Activated CD8-positive, alpha-beta T cell treated with anti-CD3 and anti-CD28 coated beads for 36 hours (primary cell): ENCODE measurements at regions of chr5 and their contacts with region 1.

Region 1: GRCh38 chr5:135565725-135566421 is 12.9 kb downstream of the CXCL14 start:
- DNase-seq: peak; percentile 83
- ATAC-seq: peak; percentile 77
- H3K4me3 Mint-ChIP-seq: no peak overlapping the region
- H3K27ac Mint-ChIP-seq: no peak overlapping the region
- H3K4me1 Mint-ChIP-seq: no peaks in the 10 kb centered on the region
- H3K27me3 Mint-ChIP-seq: no peaks in the 10 kb centered on the region
- CTCF ChIP-seq: peak; percentile 74

Region 2: DNA sequence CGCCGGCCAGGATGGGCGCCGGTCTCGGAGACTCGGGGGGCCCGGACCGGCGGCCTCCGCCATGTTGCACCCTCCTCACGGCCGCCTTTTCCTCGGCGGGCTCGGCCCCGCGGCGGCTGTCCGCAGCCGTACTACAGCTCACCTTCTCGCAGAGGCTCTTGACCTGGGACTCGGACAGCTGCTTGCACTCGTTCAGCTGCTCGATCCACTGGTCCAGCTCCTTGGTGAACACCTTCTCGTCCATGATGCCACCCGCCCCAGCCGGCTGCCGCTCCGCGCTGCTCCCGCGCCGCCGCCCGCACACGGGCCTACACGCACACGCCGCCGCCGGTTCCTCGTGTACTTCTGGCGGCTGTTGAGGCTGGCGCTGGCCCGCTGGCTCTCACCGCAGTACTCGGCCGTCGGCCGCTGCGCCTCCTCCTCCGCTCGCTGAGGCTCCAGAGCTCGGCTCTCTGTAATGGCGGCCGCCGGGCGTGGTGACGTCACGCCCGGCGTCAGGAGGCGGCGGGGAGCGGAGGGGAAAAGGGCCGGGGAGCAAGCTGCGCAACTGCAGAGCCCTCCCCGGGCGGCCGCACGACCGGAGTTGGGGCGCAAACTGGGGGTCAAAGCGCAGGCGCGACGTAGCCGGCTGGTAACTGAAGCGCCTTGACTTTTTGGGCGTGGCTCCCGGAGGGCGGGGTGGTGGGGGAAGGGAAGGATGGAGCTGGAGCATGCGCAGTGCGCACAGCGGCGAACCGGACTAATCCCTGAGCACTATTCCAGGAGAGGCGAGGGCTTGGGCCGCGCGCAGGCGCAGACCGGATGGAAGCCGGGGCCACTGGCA is 1340.0 kb before region 1 on chr5 and contains the start of gene PPP2CA:
- CTCF ChIA-PET with region 1: no interaction called
- POLR2A ChIA-PET with region 1: no interaction called
- intact Hi-C with region 1: no loop called
- DNase-seq: peak; percentile 98
- ATAC-seq: peak; percentile 90
- H3K4me3 Mint-ChIP-seq: peak within 1 kb of the TSS; percentile 98
- H3K27ac Mint-ChIP-seq: peak within 1 kb of the TSS; percentile 99
- H3K4me1 Mint-ChIP-seq: peaks cover 34% of the 10 kb centered on the region
- H3K27me3 Mint-ChIP-seq: no peaks in the 10 kb centered on the region
- CTCF ChIP-seq: no peak
- total RNA-seq, gene PPP2CA: 147 to 153 TPM

Region 3: DNA sequence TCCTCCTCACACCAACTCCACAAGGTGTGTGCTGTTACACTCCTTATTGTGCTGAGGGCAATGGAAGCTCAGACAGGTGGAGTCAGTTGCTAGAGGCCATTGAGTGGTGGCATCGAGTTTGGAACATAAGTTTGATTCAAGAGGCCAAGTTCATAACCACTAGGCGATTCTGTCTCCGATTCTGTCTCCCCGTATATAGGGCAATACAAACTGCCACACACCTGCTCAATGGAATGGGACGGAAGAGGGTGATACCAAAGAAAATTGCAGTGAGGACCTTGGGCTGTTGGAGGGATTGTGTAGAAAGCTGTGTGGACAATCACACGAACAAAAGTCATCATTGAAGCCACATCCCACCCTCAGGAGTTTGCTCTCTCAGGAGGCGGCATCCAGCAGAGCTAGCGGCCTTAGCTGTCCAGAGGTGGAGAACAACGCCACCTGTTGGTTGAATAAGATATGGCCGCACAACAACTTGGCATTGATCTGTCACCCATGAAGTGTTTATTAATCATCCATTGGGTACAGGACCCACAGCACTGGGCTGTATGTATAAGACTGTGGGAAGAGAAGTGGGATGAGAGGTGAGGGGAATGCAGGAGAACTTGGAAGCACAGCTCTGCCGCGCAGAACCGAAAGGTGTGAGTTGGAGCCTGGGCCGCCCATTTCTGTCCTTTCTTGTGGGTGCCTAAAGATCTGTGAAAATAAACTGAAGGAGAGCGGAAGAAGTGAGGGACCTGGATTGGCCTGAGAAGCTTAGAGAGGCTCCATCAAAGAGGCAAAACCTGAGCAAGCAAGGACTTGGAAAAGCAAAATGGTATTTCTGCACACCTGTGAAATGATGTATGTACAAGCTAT is 14.1 kb before region 1 on chr5:
- CTCF ChIA-PET with region 1: interaction called, 173 read pairs
- POLR2A ChIA-PET with region 1: no interaction called
- intact Hi-C with region 1: no loop called
- DNase-seq: peak; percentile 81
- ATAC-seq: peak; percentile 91
- H3K4me3 Mint-ChIP-seq: no peak overlapping the region
- H3K27ac Mint-ChIP-seq: no peak overlapping the region
- H3K4me1 Mint-ChIP-seq: no peaks in the 10 kb centered on the region
- H3K27me3 Mint-ChIP-seq: peaks cover 40% of the 10 kb centered on the region
- CTCF ChIP-seq: peak; percentile 79

Region 4: GRCh38 chr5:135578685-135579341 is 12.9 kb after region 1 on chr5 and contains the start of gene CXCL14:
- CTCF ChIA-PET with region 1: interaction called, 50 read pairs
- POLR2A ChIA-PET with region 1: no interaction called
- intact Hi-C with region 1: no loop called
- DNase-seq: peak; percentile 53
- ATAC-seq: peak; percentile 82
- H3K4me3 Mint-ChIP-seq: no peak within 1 kb of the TSS
- H3K27ac Mint-ChIP-seq: no peak within 1 kb of the TSS
- H3K4me1 Mint-ChIP-seq: peaks cover 4% of the 10 kb centered on the region
- H3K27me3 Mint-ChIP-seq: peaks cover 55% of the 10 kb centered on the region
- CTCF ChIP-seq: no peak
- total RNA-seq, gene CXCL14: not detected

Region 5: DNA sequence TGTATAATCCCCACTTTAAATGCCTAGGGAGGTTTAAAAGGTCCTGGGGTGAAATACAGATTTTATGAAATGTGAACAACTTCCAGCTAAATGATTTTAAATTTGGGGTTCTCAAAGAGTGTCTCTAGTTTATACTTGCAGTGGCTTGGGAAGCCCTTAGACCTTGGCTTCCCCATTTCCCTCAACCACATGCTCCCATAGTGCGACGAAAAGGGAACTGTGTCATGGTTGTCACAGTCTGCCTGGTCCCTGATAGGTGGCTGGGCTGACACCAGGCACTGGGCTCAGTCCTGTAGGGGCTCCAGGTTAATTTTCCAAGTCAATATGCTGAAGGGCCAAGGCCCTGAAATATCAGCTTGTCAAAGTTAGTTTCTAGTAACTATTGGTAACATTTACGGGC is 23.3 kb after region 1 on chr5:
- CTCF ChIA-PET with region 1: interaction called, 13 read pairs
- POLR2A ChIA-PET with region 1: no interaction called
- intact Hi-C with region 1: no loop called
- DNase-seq: no peak
- ATAC-seq: no peak
- H3K4me3 Mint-ChIP-seq: no peak overlapping the region
- H3K27ac Mint-ChIP-seq: no peak overlapping the region
- H3K4me1 Mint-ChIP-seq: no peaks in the 10 kb centered on the region
- H3K27me3 Mint-ChIP-seq: peaks cover 7% of the 10 kb centered on the region
- CTCF ChIP-seq: no peak

Region 6: GRCh38 chr5:135829681-135830383 is 264.0 kb after region 1 on chr5:
- CTCF ChIA-PET with region 1: interaction called, 23 read pairs
- POLR2A ChIA-PET with region 1: no interaction called
- intact Hi-C with region 1: loop called (anchors 2 kb)
- DNase-seq: peak; percentile 70
- ATAC-seq: peak; percentile 60
- H3K4me3 Mint-ChIP-seq: no peak overlapping the region
- H3K27ac Mint-ChIP-seq: no peak overlapping the region
- H3K4me1 Mint-ChIP-seq: no peaks in the 10 kb centered on the region
- H3K27me3 Mint-ChIP-seq: peaks cover 32% of the 10 kb centered on the region
- CTCF ChIP-seq: peak; percentile 66